Heart left ventricle (tissue), 16 donors: ENCODE measurements at regions of chr9 and their contacts with region 1.

Region 1: GRCh38 chr9:9681362-9681761 is 931.4 kb downstream of the PTPRD start:
- DNase-seq: no peak
- ATAC-seq: no peak
- H3K4me3 ChIP-seq: no peak overlapping the region
- H3K27ac ChIP-seq: no peak overlapping the region
- H3K4me1 ChIP-seq: no peaks in the 10 kb centered on the region
- H3K27me3 ChIP-seq: no peaks in the 10 kb centered on the region
- CTCF ChIP-seq: no peak
- POLR2A ChIP-seq: no peak

Region 2: GRCh38 chr9:9625248-9625647 is 56.1 kb before region 1 on chr9:
- intact Hi-C with region 1: loop called in 1 of 10 experiments (anchors 10 kb)
- DNase-seq: no peak
- ATAC-seq: no peak
- H3K4me3 ChIP-seq: no peak overlapping the region
- H3K27ac ChIP-seq: no peak overlapping the region
- H3K4me1 ChIP-seq: no peaks in the 10 kb centered on the region
- H3K27me3 ChIP-seq: no peaks in the 10 kb centered on the region
- CTCF ChIP-seq: no peak
- POLR2A ChIP-seq: no peak

Region 3: DNA sequence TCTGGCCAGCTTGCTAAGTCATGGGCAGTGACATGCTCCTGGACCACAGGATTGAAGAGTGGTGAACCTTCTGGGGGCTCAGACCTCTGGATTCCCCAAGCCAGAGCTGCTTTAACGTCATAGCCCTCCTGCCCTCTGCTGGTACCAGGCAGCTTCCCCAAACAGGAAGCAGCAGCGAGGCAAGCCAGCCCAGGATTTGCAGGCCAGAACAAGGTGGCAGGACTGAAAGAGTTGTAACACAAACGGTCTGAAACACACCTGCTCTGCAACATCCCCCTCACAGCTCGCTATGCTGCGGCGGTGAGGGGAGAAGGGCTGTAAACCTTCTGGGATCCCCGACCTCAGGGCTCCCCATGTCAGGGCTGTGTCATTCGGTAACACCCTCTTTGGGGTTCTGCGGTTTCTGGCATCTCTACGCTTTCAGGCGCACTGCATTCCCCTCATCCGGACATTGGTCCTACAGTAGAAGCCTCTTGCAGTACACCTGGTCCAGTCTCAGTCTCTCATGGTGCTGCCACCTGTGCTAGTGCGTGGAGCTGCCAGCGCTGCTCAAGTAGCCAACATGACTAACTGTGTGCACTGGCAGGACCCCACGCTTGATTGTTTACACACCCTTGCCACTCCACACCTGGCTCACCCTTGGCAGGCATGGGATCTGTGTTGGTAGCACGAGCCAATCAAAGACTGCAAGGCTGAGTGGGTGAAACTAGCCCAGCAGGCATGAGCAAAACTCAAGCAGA is 38.2 kb after region 1 on chr9:
- intact Hi-C with region 1: no loop called
- DNase-seq: no peak
- ATAC-seq: no peak
- H3K4me3 ChIP-seq: no peak overlapping the region
- H3K27ac ChIP-seq: no peak overlapping the region
- H3K4me1 ChIP-seq: no peaks in the 10 kb centered on the region
- H3K27me3 ChIP-seq: no peaks in the 10 kb centered on the region
- CTCF ChIP-seq: no peak
- POLR2A ChIP-seq: no peak

Region 4: DNA sequence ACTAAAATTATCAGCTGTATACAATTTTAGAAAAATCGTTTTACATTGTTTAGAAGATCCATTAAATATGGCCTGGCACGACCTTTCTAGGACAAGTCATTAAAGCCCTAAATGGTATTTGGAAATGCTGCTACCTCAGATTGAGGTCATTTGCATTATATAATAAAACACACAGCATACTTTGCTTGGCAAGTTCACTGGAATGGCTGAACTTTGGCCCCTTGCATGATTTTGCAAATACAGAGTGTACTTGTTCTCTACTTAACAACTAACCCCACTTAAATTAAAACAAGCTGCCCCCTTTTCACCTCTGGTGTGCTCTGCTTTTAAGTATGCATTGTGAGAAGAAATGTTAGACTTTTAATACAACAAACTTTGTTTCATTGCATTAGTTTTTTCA is 71.4 kb after region 1 on chr9:
- intact Hi-C with region 1: loop called in 1 of 10 experiments (anchors 10 kb)
- DNase-seq: no peak
- ATAC-seq: no peak
- H3K4me3 ChIP-seq: no peak overlapping the region
- H3K27ac ChIP-seq: no peak overlapping the region
- H3K4me1 ChIP-seq: no peaks in the 10 kb centered on the region
- H3K27me3 ChIP-seq: no peaks in the 10 kb centered on the region
- CTCF ChIP-seq: no peak
- POLR2A ChIP-seq: no peak

Region 5: GRCh38 chr9:9804109-9804508 is 122.7 kb after region 1 on chr9:
- intact Hi-C with region 1: no loop called
- DNase-seq: no peak
- ATAC-seq: no peak
- H3K4me3 ChIP-seq: no peak overlapping the region
- H3K27ac ChIP-seq: no peak overlapping the region
- H3K4me1 ChIP-seq: no peaks in the 10 kb centered on the region
- H3K27me3 ChIP-seq: no peaks in the 10 kb centered on the region
- CTCF ChIP-seq: no peak
- POLR2A ChIP-seq: no peak